ENCODE measurements at regions of chr21 and their contacts with region 1.

Region 1: DNA sequence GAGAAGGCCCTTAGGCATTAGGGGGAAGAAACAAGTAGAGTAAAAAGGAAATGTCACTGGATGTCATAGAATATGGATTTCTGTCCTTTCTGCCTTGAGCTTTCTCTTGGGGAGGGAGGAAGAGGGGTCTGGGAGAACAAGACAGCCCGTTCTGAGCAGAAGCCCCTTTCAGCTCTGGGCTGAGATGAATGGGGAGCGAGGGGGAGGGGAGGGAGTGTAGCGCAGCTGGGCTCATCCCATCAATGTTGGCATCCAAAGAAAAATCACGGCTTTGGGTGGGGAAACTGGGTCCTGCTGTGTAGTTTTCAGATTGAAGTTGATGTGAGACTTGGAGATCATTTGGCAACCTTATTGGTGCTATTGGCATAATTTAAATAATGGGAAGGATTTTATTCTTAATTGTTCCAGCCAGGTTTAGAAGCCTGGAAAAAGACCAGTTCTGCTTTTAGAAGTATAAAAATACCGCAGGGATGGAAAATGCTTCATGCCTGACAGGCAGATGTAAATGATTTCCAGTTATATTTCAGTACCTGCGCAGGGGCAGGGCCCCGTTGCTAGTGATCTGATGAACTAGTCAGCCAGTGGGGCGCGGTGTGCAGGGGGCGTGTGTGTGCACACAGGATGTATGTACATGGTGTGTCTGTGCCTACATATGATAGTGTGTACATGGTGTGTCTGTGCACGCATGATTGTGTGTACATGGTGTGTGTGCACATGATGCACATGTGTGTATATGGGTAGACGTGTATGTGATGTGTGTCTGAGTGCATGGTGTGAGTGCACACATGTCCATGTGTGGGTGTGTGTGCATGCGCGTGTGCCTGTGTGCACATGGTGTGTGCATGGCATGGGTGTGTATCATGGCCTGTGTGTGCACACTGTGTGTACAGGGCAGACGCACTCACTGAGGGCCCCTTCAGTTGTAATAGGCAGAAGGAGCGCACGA is 36.0 kb downstream of the ABCG1 start:
- DNase-seq: no peak
- CTCF ChIP-seq: no peak

Region 2: DNA sequence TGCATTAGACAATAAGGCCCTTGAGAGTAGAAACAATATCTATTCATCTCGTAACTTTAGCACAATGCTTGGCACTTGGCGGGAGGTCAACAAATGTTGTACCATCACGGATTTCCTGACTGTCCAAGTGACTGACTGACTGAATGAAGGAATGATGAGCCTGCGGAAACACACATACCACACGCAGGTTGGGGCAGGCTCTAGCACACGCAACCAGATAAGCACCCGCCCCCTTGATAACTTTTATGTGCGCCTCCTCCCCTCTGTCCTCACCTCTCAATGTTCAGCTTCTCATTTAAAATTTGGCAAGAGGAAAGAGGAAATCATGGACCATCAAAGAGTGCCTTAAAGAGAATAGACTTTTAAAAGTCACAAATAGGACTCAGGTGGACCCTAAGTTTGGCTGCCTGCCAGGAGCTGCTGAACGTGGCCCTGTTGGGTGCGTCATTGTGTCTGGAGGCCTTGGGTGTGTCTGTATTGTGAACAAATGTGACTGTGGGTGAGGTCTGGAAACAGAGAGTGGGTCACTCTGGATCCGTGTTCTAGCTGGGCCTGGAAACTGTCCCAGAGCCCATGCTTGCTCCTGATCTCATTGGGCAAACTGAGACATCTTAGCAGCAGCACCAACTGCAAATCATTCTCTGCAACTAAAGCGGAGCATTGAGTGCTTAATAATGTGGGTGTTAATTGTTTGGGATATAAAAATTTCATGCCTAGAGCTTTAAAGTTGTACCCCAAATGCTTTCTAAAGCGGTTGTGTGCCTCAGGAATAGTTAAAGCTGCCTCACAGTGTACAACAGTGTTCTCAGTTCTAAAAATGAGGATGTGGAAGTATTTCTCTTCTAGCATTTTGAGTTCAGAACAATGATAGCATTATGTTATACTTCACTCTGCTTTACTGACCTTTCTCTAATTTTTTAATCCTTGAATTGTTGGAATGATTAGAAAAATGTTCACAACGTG is 83.6 kb before region 1 on chr21:
- in situ Hi-C with region 1: loop called (anchors 5 kb)
- DNase-seq: no peak
- CTCF ChIP-seq: no peak

Measured in GM13976 (cell line).